ENCODE measurements at regions of chr7 and their contacts with region 1.

Region 1: GRCh38 chr7:139855498-139856270 is 26.6 kb downstream of the TBXAS1 start:
- DNase-seq: peak; percentile 6
- H3K4me3 Mint-ChIP-seq: no peak overlapping the region
- H3K27ac Mint-ChIP-seq: peak overlapping the region; percentile 66
- H3K4me1 Mint-ChIP-seq: peaks cover 22% of the 10 kb centered on the region
- H3K27me3 Mint-ChIP-seq: no peaks in the 10 kb centered on the region

Region 2: GRCh38 chr7:139673230-139673629 is 182.5 kb before region 1 on chr7:
- intact Hi-C with region 1: loop called (anchors 5 kb)
- DNase-seq: peak; percentile 20
- H3K4me3 Mint-ChIP-seq: no peak overlapping the region
- H3K27ac Mint-ChIP-seq: peak overlapping the region; percentile 19
- H3K4me1 Mint-ChIP-seq: peaks cover 51% of the 10 kb centered on the region
- H3K27me3 Mint-ChIP-seq: peaks cover 3% of the 10 kb centered on the region

Region 3: DNA sequence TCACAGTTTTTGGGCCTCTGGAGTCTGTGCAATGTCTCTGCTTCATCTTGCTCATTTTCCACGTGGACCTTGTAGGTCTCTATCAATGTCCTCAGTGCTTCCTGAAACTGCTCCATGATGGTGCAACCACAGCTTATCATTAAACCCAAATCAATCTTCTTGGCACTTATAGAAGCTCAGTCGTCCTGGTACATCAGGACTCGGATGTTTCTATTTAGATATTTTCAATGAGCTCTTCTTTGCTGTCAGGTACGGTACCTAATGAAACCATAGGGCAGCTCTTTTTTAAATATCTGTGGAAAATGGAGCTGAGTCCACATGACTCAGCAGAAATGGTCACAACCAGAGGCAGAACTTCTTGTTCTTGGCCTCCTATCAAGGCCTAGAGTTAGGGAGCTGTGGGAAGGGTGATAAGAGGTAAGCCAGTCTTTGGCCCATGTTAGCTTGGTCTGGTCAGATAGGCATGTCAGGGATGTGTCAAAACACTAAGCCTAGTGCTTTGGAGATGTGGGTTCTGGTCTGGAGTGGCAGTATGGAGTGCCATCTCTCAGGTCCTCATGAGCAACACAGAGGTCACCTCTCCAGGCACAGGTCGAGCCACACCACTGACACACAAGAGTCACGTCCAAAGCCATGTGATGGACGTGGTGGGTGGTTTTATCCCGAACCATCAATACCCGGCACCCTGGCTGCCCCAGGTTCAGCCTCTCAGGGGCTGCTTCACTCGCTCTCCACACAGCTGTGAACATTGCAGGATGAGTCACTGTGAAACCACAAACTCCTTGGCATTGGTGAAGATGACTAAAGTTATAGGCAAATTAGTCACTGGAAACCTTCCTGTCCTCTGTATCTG is 60.4 kb after region 1 on chr7:
- intact Hi-C with region 1: no loop called
- DNase-seq: peak; percentile 65
- H3K4me3 Mint-ChIP-seq: no peak overlapping the region
- H3K27ac Mint-ChIP-seq: peak overlapping the region; percentile 74
- H3K4me1 Mint-ChIP-seq: peaks cover 29% of the 10 kb centered on the region
- H3K27me3 Mint-ChIP-seq: peaks cover 2% of the 10 kb centered on the region